ENCODE measurements at regions of chr3 and their contacts with region 1.

Region 1: DNA sequence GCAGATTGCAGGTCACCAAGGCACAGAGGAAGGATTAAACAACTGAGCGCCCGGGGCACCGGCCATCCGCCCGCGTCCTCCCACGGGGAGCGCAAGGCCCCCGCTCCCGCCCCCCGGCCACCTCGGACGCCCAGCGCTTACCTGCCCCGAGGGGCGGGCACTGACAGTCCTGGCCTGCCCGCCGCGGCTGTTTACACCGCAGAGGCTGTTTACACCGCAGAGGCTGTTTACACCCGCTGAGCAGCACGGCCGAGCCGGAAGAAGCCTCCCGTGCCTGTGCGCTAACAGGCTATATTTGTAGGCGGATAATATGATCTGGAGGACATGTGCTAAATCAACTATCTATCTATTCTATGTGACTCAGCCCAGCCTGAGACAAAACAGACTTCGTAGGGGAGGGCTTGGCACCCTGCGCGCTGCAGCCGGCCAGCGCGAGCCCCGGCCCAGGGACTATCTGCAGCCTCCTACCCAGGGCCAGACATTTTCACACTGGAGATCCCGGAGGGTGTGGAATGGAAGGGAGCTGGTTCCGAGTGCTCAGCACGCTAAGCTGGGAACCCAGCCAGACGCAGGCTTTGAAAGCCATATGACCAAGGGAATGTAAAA is at the start of gene LRRC2:
- DNase-seq: no peak
- H3K4me3 ChIP-seq: peak within 1 kb of the TSS; percentile 35 to 40
- H3K27ac ChIP-seq: peak within 1 kb of the TSS in 1 of 2 donors; percentile 17
- H3K4me1 ChIP-seq: no peaks in the 10 kb centered on the region
- H3K27me3 ChIP-seq: no peaks in the 10 kb centered on the region
- CTCF ChIP-seq: no peak
- POLR2A ChIP-seq: no peak
- total RNA-seq, gene LRRC2: 0.45 to 1.6 TPM

Region 2: GRCh38 chr3:46612324-46612723 is 46.2 kb after region 1 on chr3 and contains the start of gene FAM240A:
- intact Hi-C with region 1: no loop called
- DNase-seq: peak; percentile 29
- H3K4me3 ChIP-seq: no peak within 1 kb of the TSS
- H3K27ac ChIP-seq: no peak within 1 kb of the TSS
- H3K4me1 ChIP-seq: no peaks in the 10 kb centered on the region
- H3K27me3 ChIP-seq: no peaks in the 10 kb centered on the region
- CTCF ChIP-seq: no peak
- POLR2A ChIP-seq: no peak
- total RNA-seq, gene FAM240A: 0.32 TPM in 1 of 2 donors, not detected in the other

Region 3: GRCh38 chr3:46629551-46630517 is 63.7 kb after region 1 on chr3:
- intact Hi-C with region 1: loop called (anchors 5 kb)
- DNase-seq: peak; percentile 57
- H3K4me3 ChIP-seq: no peak overlapping the region
- H3K27ac ChIP-seq: peak overlapping the region in 1 of 2 donors; percentile 49
- H3K4me1 ChIP-seq: no peaks in the 10 kb centered on the region
- H3K27me3 ChIP-seq: no peaks in the 10 kb centered on the region
- CTCF ChIP-seq: peak; percentile 71 to 96 (median 82)
- POLR2A ChIP-seq: no peak

Region 4: DNA sequence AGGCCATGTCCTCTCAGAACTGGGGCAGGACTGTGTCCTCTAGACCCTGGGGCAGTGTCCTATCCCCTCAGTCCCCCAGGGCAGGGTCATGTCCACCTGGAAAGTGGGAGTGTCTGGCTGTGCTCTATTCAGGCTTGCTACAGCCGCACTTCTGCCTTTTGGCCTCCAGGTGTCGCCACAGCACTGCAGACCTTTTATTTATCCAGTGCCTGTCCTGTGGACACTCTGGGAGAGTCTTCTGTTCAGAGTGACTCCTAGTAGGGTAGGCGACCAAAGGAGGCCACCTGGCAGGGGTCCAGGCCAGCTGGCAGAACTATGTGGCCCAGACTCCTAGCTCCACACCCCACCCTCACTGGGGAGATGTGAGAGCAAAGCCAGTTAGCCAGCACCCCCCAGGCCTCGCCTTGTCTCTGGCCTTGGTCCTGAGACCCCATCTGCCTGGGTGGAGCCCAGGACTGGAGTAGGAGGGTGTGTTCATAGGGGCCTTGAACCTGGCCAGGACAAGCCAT is 138.9 kb after region 1 on chr3:
- intact Hi-C with region 1: no loop called
- DNase-seq: peak; percentile 69
- H3K4me3 ChIP-seq: no peak overlapping the region
- H3K27ac ChIP-seq: no peak overlapping the region
- H3K4me1 ChIP-seq: peaks cover 5% of the 10 kb centered on the region
- H3K27me3 ChIP-seq: peaks cover 6% of the 10 kb centered on the region
- CTCF ChIP-seq: peak; percentile 90 to 98 (median 94)
- POLR2A ChIP-seq: no peak